Activated B cell treated with CpG ODN at 0.5 μM for 24 hours (primary cell): ENCODE measurements at regions of chr6 and their contacts with region 1.

Region 1: GRCh38 chr6:113858480-113859348 is 1.6 kb downstream of the MARCKS start:
- DNase-seq: peak; percentile 98
- ATAC-seq: peak; percentile 76
- H3K4me3 Mint-ChIP-seq: no peak overlapping the region
- H3K27ac Mint-ChIP-seq: peak overlapping the region; percentile 85
- H3K4me1 Mint-ChIP-seq: peaks cover 23% of the 10 kb centered on the region
- H3K27me3 Mint-ChIP-seq: no peaks in the 10 kb centered on the region
- CTCF ChIP-seq: peak; percentile 88

Region 2: GRCh38 chr6:112780498-112781096 is 1078.1 kb before region 1 on chr6:
- CTCF ChIA-PET with region 1: interaction called, 17 read pairs
- POLR2A ChIA-PET with region 1: no interaction called
- intact Hi-C with region 1: loop called (anchors 1 kb)
- DNase-seq: peak; percentile 23
- ATAC-seq: peak; percentile 80
- H3K4me3 Mint-ChIP-seq: no peak overlapping the region
- H3K27ac Mint-ChIP-seq: no peak overlapping the region
- H3K4me1 Mint-ChIP-seq: peaks cover 3% of the 10 kb centered on the region
- H3K27me3 Mint-ChIP-seq: no peaks in the 10 kb centered on the region
- CTCF ChIP-seq: peak; percentile 49

Region 3: DNA sequence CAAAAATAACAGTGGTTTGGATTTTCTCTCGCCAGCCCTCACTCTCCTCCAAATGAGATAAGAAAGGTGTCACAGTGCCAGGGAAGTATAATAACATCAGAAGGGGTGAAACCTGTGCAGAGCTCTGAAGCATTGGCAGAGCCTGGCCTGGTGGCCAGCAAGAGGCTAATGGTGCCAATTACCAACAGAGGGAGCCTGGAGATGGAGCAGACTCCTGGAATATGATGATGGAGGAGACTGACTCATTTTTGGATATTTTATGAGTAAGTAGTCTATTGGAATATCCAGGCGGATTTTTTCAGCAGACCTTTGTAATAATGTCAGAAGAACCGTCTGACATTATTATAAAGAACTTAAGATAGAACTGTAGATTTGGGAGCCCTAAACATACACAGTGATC is 444.2 kb before region 1 on chr6:
- CTCF ChIA-PET with region 1: no interaction called
- POLR2A ChIA-PET with region 1: no interaction called
- intact Hi-C with region 1: loop called (anchors 5 kb)
- DNase-seq: no peak
- ATAC-seq: no peak
- H3K4me3 Mint-ChIP-seq: no peak overlapping the region
- H3K27ac Mint-ChIP-seq: no peak overlapping the region
- H3K4me1 Mint-ChIP-seq: peaks cover 6% of the 10 kb centered on the region
- H3K27me3 Mint-ChIP-seq: no peaks in the 10 kb centered on the region
- CTCF ChIP-seq: no peak

Region 4: GRCh38 chr6:113642714-113643406 is 215.9 kb before region 1 on chr6:
- CTCF ChIA-PET with region 1: interaction called, 6 read pairs
- POLR2A ChIA-PET with region 1: interaction called, 11 read pairs
- intact Hi-C with region 1: no loop called
- DNase-seq: no peak
- ATAC-seq: peak; percentile 66
- H3K4me3 Mint-ChIP-seq: peak overlapping the region; percentile 2
- H3K27ac Mint-ChIP-seq: peak overlapping the region; percentile 54
- H3K4me1 Mint-ChIP-seq: peaks cover 53% of the 10 kb centered on the region
- H3K27me3 Mint-ChIP-seq: no peaks in the 10 kb centered on the region
- CTCF ChIP-seq: no peak

Region 5: DNA sequence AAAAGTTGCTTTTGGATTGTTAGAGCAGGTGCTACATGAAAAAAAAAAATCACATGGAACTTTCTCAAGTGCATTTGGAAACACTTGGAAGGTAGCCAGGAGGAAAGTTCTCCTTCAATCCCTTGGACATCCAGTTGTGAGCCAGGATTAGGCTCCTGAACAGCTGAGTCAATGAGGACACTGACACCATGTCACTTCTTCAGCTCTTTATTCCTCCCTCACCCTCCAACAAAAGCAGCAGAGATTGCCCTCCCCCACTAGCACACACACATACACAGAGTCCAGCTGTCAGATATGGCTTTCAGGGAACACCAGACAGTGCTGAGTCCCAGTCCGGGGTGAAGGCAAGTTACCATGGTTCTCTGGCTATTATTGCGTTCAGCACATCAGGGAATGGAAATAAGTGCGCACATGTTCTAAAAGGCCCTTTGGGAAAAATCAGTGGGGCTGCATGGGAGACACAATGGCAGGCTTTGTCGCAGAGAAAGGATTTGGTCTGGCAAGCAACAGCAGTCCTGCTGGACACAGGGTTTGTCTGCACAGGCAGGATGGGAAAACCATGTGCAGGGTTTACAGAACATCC is 126.2 kb before region 1 on chr6:
- CTCF ChIA-PET with region 1: no interaction called
- POLR2A ChIA-PET with region 1: no interaction called
- intact Hi-C with region 1: no loop called
- DNase-seq: no peak
- ATAC-seq: no peak
- H3K4me3 Mint-ChIP-seq: no peak overlapping the region
- H3K27ac Mint-ChIP-seq: no peak overlapping the region
- H3K4me1 Mint-ChIP-seq: peaks cover 7% of the 10 kb centered on the region
- H3K27me3 Mint-ChIP-seq: no peaks in the 10 kb centered on the region
- CTCF ChIP-seq: no peak

Region 6: GRCh38 chr6:113805173-113805790 is 53.4 kb before region 1 on chr6:
- CTCF ChIA-PET with region 1: interaction called, 8 read pairs
- POLR2A ChIA-PET with region 1: interaction called, 15 read pairs
- intact Hi-C with region 1: loop called (anchors 1 kb)
- DNase-seq: no peak
- ATAC-seq: peak; percentile 53
- H3K4me3 Mint-ChIP-seq: peak overlapping the region; percentile 52
- H3K27ac Mint-ChIP-seq: peak overlapping the region; percentile 67
- H3K4me1 Mint-ChIP-seq: peaks cover 56% of the 10 kb centered on the region
- H3K27me3 Mint-ChIP-seq: no peaks in the 10 kb centered on the region
- CTCF ChIP-seq: no peak

Region 7: DNA sequence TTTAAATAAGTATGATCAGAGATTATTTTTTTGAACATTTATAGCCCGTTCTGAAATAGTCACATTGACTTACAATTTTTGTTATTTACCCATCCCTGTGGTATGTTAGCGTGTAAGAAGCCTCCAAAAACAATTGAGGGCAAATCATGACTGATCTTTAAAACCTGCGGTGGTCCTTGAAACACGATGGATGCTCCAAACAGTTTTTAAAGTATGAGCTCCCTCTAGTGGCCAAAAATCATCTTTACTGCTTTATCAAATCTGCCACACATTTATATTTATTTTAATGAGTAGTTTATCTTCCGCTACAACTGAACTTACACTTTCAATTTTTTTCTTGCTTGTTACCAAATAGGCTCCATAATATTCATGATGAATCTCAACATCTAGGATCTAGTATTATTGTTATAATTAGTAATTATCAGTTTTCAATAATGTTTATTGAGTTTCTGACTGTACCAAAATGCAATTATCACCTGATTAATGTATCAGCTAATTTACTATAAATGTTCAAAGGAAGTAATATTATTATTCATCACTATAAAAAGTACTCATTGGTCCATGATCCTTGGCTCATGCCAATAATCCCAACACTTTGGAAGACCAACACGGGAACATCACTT is 50.6 kb after region 1 on chr6:
- CTCF ChIA-PET with region 1: interaction called, 10 read pairs
- POLR2A ChIA-PET with region 1: no interaction called
- intact Hi-C with region 1: no loop called
- DNase-seq: no peak
- ATAC-seq: peak; percentile 37
- H3K4me3 Mint-ChIP-seq: no peak overlapping the region
- H3K27ac Mint-ChIP-seq: no peak overlapping the region
- H3K4me1 Mint-ChIP-seq: no peaks in the 10 kb centered on the region
- H3K27me3 Mint-ChIP-seq: peaks cover 2% of the 10 kb centered on the region
- CTCF ChIP-seq: peak; percentile 63

Region 8: DNA sequence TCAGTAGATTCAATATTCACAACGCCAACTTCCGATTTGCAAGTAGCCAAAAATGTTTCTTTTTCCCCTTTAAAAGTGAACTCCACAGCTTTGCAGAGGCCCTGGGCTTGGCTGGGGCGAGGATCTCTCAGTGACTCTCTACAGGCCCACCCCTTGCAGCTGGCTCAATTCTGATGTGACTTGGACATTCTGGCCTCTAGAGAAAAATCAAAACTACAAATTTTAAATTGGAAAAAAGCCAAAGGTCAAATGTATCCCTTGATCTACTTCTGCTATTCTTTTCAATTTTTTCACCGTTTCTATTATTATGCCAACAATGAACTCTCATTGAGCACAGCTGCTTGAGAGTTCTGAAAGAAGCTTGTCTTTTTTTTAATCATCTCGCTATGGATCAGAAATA is 730.0 kb after region 1 on chr6:
- CTCF ChIA-PET with region 1: no interaction called
- POLR2A ChIA-PET with region 1: no interaction called
- intact Hi-C with region 1: no loop called
- DNase-seq: no peak
- ATAC-seq: no peak
- H3K4me3 Mint-ChIP-seq: no peak overlapping the region
- H3K27ac Mint-ChIP-seq: no peak overlapping the region
- H3K4me1 Mint-ChIP-seq: no peaks in the 10 kb centered on the region
- H3K27me3 Mint-ChIP-seq: no peaks in the 10 kb centered on the region
- CTCF ChIP-seq: no peak

Region 9: DNA sequence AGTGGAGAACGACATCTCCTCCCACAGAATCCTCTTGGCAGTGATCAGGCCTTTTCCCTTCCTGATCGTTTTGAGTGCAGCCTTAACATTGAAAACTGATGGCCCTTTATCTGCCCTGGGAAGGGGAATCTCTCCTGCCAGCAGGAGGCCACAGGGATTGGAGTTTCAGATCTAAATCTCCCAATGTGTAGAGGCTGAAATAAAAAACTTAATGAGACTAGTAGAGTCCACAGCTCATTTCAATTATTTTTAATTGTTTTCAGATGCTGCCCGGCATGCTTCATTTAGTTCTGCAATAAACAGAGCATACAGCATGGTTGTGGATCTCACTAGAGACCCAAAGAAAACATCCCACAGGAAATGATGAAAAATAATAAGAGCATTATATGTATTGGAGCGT is 1146.3 kb after region 1 on chr6:
- CTCF ChIA-PET with region 1: no interaction called
- POLR2A ChIA-PET with region 1: no interaction called
- intact Hi-C with region 1: no loop called
- DNase-seq: no peak
- ATAC-seq: no peak
- H3K4me3 Mint-ChIP-seq: no peak overlapping the region
- H3K27ac Mint-ChIP-seq: no peak overlapping the region
- H3K4me1 Mint-ChIP-seq: no peaks in the 10 kb centered on the region
- H3K27me3 Mint-ChIP-seq: no peaks in the 10 kb centered on the region
- CTCF ChIP-seq: no peak